ENCODE measurements at regions of chr7 and their contacts with region 1.

Region 1: DNA sequence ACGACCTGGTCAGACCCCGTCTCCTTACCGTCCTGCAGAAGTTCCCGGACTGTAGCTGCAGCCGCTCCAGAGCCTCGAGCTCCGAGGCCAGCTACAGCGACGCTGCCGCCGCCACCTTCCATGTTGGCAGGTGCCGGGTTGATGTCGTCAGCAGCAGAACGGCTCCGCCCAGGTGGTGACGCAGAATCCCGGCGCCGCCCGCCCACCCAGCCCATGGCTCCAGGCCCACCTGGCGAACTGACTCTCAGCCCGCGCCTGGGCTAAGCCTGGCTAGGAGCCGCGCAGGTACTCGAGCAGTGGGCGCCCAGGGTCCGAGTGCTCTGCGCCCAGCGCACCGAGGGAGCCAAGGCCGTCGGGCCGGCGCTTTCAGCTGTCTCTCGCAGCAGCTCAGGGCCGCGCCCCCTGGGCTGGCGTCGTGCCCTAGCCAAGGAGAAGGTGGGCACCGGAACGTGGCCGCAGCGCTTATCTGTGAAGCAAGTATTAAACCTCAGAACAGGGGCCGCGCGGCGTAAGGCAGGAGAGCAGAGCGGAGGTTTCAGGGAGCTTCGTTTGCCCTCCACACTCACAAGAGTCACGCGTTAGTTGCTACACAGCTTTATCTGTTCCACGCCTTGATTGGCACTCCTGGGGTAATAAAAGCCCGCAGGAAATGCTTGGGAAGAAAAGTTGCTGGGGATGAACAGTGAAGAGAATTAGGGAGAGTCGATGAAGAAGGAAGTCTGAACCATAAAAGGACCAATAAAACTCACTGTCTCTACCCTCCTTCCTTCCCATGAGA is at the starts of genes COG5 and DUS4L:
- DNase-seq: peak; percentile 61
- ATAC-seq: peak; percentile 94
- H3K4me3 ChIP-seq: peak within 1 kb of the TSS; percentile 86 to 100 (median 94)
- H3K27ac ChIP-seq: peak within 1 kb of the TSS; percentile 88
- H3K4me1 ChIP-seq: peaks cover 52% of the 10 kb centered on the region
- H3K27me3 ChIP-seq: no peaks in the 10 kb centered on the region; a peak in 1 of 5 replicates
- CTCF ChIP-seq: peak; percentile 27; the same call in 1 of the 2 replicates
- EP300 ChIP-seq: peak in 1 of 2 experiments; percentile 9; a peak in 1 of 4 replicates
- POLR2A ChIP-seq: peak; percentile 88 to 97
- RAD21 ChIP-seq: peak; percentile 47
- total RNA-seq, gene COG5: 31.3 and 50.0 TPM in 2 replicates
- total RNA-seq, gene DUS4L: 9.8 and 10.6 TPM in 2 replicates

Region 2: GRCh38 chr7:106829496-106829895 is 734.5 kb before region 1 on chr7:
- CTCF ChIA-PET with region 1: no interaction called
- POLR2A ChIA-PET with region 1: no interaction called
- in situ Hi-C with region 1: no loop called
- intact Hi-C with region 1: no loop called
- DNase-seq: no peak
- ATAC-seq: no peak
- H3K4me3 ChIP-seq: no peak overlapping the region
- H3K27ac ChIP-seq: no peak overlapping the region
- H3K4me1 ChIP-seq: no peaks in the 10 kb centered on the region
- H3K27me3 ChIP-seq: peaks cover 0 to 10% of the 10 kb centered on the region in 2 experiments; a peak in 3 of 5 replicates
- CTCF ChIP-seq: no peak
- EP300 ChIP-seq: no peak
- POLR2A ChIP-seq: no peak
- RAD21 ChIP-seq: no peak

Region 3: GRCh38 chr7:107579885-107580715 is 16.1 kb after region 1 on chr7 and contains the start of gene BCAP29:
- CTCF ChIA-PET with region 1: no interaction called
- POLR2A ChIA-PET with region 1: interaction called, 13 read pairs
- in situ Hi-C with region 1: no loop called
- intact Hi-C with region 1: no loop called
- DNase-seq: peak; percentile 67
- ATAC-seq: peak; percentile 95
- H3K4me3 ChIP-seq: peak within 1 kb of the TSS; percentile 86 to 95 (median 87)
- H3K27ac ChIP-seq: peak within 1 kb of the TSS; percentile 91
- H3K4me1 ChIP-seq: peaks cover 11% of the 10 kb centered on the region
- H3K27me3 ChIP-seq: no peaks in the 10 kb centered on the region
- CTCF ChIP-seq: peak; percentile 72
- EP300 ChIP-seq: peak in 1 of 2 experiments; percentile 23; a peak in 1 of 4 replicates
- POLR2A ChIP-seq: peak; percentile 71 to 77
- RAD21 ChIP-seq: peak; percentile 81
- total RNA-seq, gene BCAP29: 27.8 and 35.6 TPM in 2 replicates

Region 4: DNA sequence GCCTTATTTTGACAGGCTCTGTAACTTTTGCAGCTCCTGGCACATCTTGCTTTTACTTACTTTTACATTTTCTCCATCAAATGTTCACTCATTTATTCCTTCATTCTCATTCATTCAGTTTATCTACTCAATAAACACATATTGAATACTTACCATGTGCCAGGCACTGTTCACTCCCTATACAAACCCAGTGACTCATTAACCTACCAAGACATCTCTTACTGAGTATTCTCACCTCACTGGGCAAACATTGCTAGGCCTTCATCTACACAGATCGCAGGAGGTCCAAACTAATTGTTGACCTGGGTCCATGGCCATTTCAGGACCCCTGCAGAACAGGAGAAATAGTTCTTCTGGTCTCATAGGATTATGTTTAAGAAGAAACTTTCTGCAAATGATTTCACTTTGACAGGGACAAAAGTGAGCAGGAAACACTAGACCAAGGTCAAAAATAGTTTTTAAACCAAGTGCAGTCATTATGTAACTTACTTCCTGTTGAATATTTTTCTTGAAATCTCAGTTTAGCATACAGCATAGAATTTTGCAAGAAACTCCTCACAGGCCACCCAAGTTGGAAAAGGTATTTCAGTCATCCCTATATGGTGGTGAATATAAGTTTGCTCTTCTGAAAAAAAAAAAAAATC is 114.3 kb after region 1 on chr7:
- CTCF ChIA-PET with region 1: no interaction called
- POLR2A ChIA-PET with region 1: no interaction called
- in situ Hi-C with region 1: no loop called
- intact Hi-C with region 1: no loop called
- DNase-seq: peak; percentile 9
- ATAC-seq: peak; percentile 65
- H3K4me3 ChIP-seq: no peak overlapping the region
- H3K27ac ChIP-seq: no peak overlapping the region
- H3K4me1 ChIP-seq: peaks cover 11% of the 10 kb centered on the region
- H3K27me3 ChIP-seq: no peaks in the 10 kb centered on the region
- CTCF ChIP-seq: no peak
- EP300 ChIP-seq: no peak
- POLR2A ChIP-seq: no peak
- RAD21 ChIP-seq: no peak

Measured in HepG2 (cell line).